ENCODE measurements at regions of chr9 and their contacts with region 1.

Region 1: DNA sequence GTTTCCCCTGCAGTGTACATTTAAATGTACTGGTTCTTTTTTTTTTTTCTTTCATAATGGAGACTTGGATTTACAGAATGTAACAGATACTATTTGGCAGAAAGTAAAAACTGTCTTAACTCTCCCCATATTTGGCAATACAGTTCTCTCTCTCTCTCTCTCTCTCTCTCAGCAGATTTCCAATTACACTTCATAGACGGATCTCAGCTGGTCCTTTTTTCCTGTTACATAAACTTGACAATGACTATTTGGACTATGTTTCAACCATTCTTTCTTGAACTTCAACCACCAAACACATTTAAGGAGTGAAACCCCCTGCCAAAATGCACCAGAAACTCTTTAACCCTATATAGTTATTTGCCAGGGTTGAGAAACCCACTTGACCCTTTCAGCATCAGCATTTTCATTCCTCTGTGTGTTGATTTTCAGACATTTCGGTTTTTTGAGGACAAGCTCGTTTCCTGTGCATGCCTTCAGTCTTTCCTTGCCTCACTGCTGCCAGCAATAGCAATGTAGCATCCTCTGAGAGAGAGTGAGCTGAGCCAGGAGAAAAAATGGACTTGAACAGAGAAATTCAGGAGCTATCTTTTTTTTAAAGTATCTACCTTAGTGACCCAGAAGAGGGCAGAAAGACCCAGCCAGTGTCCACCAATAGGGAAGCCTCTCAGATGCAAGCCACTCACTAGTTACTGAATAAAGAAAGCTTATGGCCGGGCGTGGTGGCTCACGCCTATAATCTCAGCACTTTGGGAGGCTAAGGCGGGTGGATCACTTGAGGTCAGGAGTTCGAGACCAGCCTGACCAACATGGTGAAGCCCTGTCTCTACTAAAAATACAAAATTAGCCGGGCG is 26.0 kb upstream of the GNA14 start:
- DNase-seq: no peak
- ATAC-seq: no peak
- H3K4me3 ChIP-seq: no peak overlapping the region
- H3K4me3 Mint-ChIP-seq: no peak overlapping the region
- H3K27ac ChIP-seq: no peak overlapping the region
- H3K27ac Mint-ChIP-seq: no peak overlapping the region
- H3K4me1 ChIP-seq: no peaks in the 10 kb centered on the region
- H3K4me1 Mint-ChIP-seq: no peaks in the 10 kb centered on the region
- H3K27me3 ChIP-seq: no peaks in the 10 kb centered on the region
- H3K27me3 Mint-ChIP-seq: no peaks in the 10 kb centered on the region
- CTCF ChIP-seq: no peak

Region 2: DNA sequence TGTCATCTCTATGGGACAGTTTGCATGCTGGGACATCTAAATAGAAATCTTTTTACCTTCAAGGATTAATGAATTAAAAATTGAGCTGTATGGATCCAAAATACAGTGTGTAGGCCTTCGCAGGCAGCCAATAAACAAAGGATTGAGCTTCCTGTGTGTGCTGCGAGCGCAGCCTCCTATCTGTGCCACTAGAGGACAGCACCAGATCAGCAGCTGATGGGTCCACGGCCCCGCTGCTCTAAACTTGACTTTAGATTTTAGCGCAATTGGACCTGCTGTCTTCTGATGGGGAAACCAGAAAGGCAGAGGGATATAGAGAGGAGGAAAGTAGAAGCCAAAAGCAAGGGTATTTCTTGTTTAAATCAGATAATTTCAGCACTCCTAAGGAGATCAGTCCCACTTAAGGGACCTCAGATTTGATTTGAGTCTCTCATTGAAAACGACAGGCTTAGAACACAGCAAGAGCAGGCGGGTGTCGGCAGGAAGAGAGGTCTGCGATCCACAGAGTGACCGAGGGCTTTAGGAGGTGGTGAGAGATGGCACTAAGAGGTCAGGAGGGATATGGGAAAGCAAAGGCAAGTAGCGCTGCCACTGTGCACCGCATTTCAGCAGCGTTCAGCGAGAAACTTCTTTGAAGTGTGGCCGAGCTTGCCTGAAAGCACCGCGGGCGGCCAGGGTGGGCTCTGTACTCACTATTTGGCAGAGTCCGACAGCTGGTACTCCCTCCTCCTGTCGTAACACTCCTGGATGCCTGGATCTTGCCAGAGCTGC is 240.3 kb before region 1 on chr9:
- CTCF ChIA-PET with region 1: no interaction called
- POLR2A ChIA-PET with region 1: no interaction called
- intact Hi-C with region 1: no loop called
- DNase-seq: peak; percentile 14 to 71 (median 38)
- ATAC-seq: peak; percentile 91
- H3K4me3 ChIP-seq: no peak overlapping the region
- H3K4me3 Mint-ChIP-seq: no peak overlapping the region
- H3K27ac ChIP-seq: no peak overlapping the region
- H3K27ac Mint-ChIP-seq: no peak overlapping the region
- H3K4me1 ChIP-seq: peaks cover 5% of the 10 kb centered on the region
- H3K4me1 Mint-ChIP-seq: peaks cover 5% of the 10 kb centered on the region
- H3K27me3 ChIP-seq: no peaks in the 10 kb centered on the region
- H3K27me3 Mint-ChIP-seq: peaks cover 5% of the 10 kb centered on the region
- CTCF ChIP-seq: peak; percentile 92

Region 3: GRCh38 chr9:77616191-77616590 is 58.0 kb before region 1 on chr9:
- CTCF ChIA-PET with region 1: no interaction called
- POLR2A ChIA-PET with region 1: no interaction called
- intact Hi-C with region 1: loop called in 1 of 2 experiments (anchors 5 kb)
- DNase-seq: no peak
- ATAC-seq: no peak
- H3K4me3 ChIP-seq: no peak overlapping the region
- H3K4me3 Mint-ChIP-seq: no peak overlapping the region
- H3K27ac ChIP-seq: no peak overlapping the region
- H3K27ac Mint-ChIP-seq: no peak overlapping the region
- H3K4me1 ChIP-seq: no peaks in the 10 kb centered on the region
- H3K4me1 Mint-ChIP-seq: no peaks in the 10 kb centered on the region
- H3K27me3 ChIP-seq: no peaks in the 10 kb centered on the region
- H3K27me3 Mint-ChIP-seq: no peaks in the 10 kb centered on the region
- CTCF ChIP-seq: no peak